Sigmoid colon (tissue), 7 donors: ENCODE measurements at regions of chr1 and their contacts with region 1.

Region 1: DNA sequence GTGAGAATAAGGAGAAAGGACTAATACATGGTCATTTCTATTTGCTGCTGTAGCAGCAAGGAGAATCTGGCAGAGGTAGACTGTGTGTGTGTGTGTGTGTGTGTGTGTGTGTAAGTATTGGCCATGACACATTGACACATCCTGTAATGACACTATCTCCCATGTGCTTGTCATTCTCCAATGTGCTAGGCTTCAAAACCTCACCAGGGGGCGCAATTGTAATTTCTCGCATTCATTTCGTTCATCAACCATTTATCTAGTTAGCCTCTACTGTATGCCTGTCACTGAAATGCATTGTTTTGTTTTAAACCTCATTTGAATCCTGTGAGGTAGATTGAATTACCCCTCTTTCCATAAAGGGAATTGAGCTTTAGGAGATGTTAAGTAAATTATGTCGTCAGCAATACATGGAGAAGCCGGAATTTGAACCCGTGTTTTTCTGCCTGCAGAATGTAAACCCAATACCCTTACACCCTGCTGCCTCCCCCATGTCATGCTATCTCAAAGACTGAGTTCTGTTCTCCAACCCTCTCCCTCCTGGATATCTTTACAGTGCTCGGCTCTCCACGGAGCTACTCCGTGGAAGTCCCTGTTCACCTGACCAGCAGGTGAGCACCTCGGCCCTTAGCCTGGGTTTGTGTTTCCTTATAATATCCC is 100.8 kb downstream of the UCK2 start:
- DNase-seq: no peak
- H3K4me3 ChIP-seq: no peak overlapping the region
- H3K27ac ChIP-seq: no peak overlapping the region
- H3K4me1 ChIP-seq: no peaks in the 10 kb centered on the region
- H3K27me3 ChIP-seq: no peaks in the 10 kb centered on the region
- CTCF ChIP-seq: peak; percentile 23 to 50 (median 43)
- EP300 ChIP-seq: no peak
- POLR2A ChIP-seq: no peak

Region 2: DNA sequence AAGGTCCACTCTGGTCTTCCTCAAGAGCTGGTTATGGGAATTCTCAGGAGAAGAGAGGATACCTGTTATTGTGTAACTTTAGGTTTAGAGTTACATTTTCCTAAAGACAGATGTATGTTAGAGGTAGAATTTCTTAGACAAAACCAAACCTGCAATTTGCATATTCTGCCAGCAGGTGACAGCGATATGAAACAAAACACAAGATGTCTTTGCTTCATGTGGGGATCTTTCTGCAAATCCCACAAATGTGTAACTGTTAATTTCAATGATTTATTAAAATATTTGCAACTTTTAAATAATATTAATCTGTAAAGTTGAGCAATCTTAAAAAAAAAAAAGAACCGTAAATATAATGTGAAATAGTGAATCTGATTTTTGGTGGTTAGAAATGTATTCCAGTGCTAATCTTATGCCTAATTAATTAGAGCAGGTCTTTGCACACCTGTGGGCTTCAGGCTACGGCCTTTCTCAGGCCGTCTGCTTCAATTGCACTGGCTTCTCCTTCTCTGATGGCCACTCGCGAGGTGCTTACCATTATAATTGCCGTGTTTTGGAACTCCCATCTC is 205.2 kb after region 1 on chr1:
- intact Hi-C with region 1: no loop called
- DNase-seq: no peak
- H3K4me3 ChIP-seq: no peak overlapping the region
- H3K27ac ChIP-seq: no peak overlapping the region
- H3K4me1 ChIP-seq: peaks cover 0 to 2% (median 0%) of the 10 kb centered on the region in 4 donors
- H3K27me3 ChIP-seq: no peaks in the 10 kb centered on the region
- CTCF ChIP-seq: no peak
- EP300 ChIP-seq: no peak
- POLR2A ChIP-seq: no peak

Region 3: DNA sequence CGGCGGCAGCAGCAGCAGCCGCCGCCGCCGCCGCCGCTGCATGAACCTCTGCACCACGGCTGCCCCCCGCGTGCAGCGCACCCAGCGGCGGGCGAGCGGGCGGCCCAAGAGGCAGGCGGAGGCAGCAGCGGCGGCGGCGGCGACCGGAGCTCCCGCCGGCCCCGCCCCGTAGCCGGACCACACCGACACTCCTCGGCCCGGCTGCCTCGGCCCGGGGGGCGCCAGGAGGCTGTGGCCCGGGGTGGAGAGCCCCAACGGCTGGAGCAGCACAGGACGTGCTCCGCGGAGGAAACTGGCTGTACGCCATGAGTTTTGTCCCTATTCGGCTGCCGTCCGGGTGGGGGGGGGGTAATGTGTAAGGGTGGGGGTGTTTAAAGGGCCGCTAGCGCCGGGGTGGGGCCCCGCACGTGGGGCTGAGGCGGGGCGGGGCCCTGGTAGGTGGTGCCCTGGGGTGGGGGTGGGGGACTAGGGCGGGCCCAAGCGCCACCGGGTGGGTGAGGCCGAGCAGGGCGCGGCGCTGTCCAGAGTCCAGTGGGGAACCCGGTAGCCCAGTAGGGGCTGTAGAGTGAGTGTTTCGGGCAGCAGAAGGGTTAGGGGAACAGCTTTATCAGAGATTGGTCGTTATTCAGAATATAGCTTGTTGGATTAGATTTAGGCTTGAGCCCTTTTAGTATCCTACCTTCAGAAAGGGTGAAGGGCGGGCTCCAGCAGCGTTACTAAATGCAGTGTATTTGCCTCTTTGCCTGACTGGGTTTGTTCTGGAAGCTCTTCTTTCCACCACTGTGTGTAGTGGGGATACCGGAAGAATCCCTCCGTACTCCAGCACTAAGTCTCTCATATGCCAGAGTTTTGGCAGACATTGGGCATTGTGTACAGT is 238.7 kb after region 1 on chr1 and contains the start of gene FAM78B:
- intact Hi-C with region 1: loop called (anchors 5 kb)
- DNase-seq: peak; percentile 91
- H3K4me3 ChIP-seq: peak within 1 kb of the TSS; percentile 46 to 79 (median 74)
- H3K27ac ChIP-seq: peak within 1 kb of the TSS; percentile 56 to 83 (median 73)
- H3K4me1 ChIP-seq: peaks cover 0 to 27% (median 21%) of the 10 kb centered on the region in 4 donors
- H3K27me3 ChIP-seq: no peaks in the 10 kb centered on the region
- CTCF ChIP-seq: no peak
- EP300 ChIP-seq: no peak
- POLR2A ChIP-seq: no peak
- total RNA-seq, gene FAM78B: 2.0 to 5.4 (median 3.1) TPM

Region 4: DNA sequence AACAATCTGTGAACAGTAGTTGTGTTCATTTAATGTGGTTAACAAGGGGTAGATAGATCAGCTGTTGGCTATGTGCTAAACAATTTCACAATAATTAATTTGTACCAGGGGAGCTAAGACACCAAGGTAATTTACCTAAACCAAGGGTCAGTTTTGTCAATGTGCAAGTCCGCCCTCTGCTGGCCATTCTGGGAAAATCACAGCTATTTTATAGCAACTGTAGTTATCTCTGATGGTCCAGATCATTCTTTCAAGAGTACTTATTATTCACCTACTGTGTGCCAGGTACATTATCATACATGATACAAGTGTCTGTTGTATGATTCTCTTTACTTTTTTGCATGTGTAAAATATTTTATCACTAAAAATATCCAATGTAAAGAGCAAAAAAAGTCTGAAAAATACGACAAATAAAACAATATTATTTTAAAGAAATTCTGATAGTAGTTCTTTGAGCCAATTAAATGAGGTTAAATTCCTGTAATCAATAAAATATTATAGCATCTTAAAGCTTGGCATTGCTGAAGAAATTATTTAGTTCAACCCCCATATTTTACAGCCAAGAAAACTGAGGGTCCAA is 550.9 kb after region 1 on chr1:
- intact Hi-C with region 1: loop called (anchors 2 kb)
- DNase-seq: no peak
- H3K4me3 ChIP-seq: no peak overlapping the region
- H3K27ac ChIP-seq: no peak overlapping the region
- H3K4me1 ChIP-seq: no peaks in the 10 kb centered on the region
- H3K27me3 ChIP-seq: no peaks in the 10 kb centered on the region
- CTCF ChIP-seq: peak; percentile 21 to 80 (median 46)
- EP300 ChIP-seq: no peak
- POLR2A ChIP-seq: no peak